Ovary (tissue), 10 donors: ENCODE measurements at regions of chr10 and their contacts with region 1.

Region 1: GRCh38 chr10:103069453-103070331 is 123.4 kb downstream of the NT5C2 start:
- DNase-seq: peak; percentile 54 to 75 (median 73)
- H3K4me3 ChIP-seq: no peak overlapping the region
- H3K27ac ChIP-seq: no peak overlapping the region
- H3K4me1 ChIP-seq: no peaks in the 10 kb centered on the region
- H3K27me3 ChIP-seq: no peaks in the 10 kb centered on the region
- CTCF ChIP-seq: peak; percentile 70 to 74 (median 73)
- EP300 ChIP-seq: no peak
- POLR2A ChIP-seq: no peak

Region 2: DNA sequence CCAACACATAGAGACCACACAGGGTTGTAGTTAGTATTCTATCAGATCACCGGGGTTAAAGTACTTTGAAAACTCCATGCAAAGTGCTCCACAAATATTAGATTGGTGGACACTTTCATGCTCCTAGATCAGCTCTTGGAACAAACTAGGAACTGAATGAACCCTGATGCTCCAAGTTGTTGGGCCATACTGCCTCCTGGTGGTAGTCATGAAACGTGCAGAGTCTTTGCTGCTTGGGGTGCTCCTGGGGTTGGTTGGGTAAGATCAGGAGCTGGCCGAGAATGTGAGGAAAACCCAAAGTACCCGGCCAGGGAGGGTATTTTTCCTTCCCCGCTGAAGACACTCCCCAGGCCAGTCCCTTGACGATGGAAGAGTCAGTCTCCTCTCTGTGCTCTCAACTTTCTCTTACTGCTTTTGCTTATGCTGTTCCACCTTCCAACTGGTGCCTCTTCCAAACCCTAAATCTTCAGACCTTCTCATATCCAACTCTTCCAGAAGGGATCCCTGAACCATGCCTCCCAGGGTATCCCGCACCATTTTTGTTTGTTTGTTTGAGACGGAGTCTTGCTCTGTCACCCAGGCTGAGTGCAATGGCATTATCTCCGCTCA is 175.1 kb after region 1 on chr10:
- intact Hi-C with region 1: loop called in 1 of 4 experiments (anchors 10 kb)
- DNase-seq: peak; percentile 56 to 81 (median 58)
- H3K4me3 ChIP-seq: no peak overlapping the region
- H3K27ac ChIP-seq: no peak overlapping the region
- H3K4me1 ChIP-seq: no peaks in the 10 kb centered on the region
- H3K27me3 ChIP-seq: no peaks in the 10 kb centered on the region
- CTCF ChIP-seq: peak; percentile 29 to 80 (median 57)
- EP300 ChIP-seq: no peak
- POLR2A ChIP-seq: no peak